WTC11 (cell line): ENCODE measurements at regions of chr11 and their contacts with region 1.

Region 1: DNA sequence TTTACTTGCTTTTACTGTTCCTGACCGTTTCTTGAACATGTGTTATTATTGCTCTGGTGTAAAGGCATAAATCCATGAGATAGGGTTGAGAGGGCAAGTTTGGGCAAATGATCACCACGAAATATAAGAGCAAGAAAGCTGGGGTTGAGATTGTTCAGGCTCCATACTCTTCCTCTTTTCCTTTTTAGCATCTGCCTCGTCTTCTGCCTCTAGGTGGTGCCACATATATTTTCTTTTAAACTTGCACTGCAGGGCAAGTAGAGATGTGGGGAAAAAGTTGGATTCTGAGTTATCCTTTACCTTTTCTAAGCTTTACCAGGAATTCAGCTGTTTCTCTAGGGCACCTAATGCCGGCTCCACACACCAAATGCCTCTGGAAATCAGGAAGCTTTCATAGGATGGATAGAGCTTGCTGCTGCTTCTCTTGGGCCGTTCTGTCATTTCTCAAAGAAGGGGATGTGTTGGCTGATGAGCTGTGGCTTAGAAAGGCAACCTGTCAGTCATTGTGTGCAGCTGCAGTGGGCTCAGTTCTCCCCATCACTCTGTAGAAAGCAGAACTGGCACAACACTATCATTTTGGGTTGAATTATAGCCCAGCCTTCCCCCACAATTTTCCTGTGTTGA is 98.2 kb downstream of the LDLRAD3 start:
- DNase-seq: no peak
- ATAC-seq: peak; percentile 70; the same call in 1 of the 2 replicates
- H3K4me3 Mint-ChIP-seq: no peak overlapping the region
- H3K27ac Mint-ChIP-seq: peak overlapping the region; percentile 91
- H3K4me1 Mint-ChIP-seq: peaks cover 14% of the 10 kb centered on the region
- H3K27me3 Mint-ChIP-seq: no peaks in the 10 kb centered on the region
- CTCF ChIP-seq: no peak

Region 2: DNA sequence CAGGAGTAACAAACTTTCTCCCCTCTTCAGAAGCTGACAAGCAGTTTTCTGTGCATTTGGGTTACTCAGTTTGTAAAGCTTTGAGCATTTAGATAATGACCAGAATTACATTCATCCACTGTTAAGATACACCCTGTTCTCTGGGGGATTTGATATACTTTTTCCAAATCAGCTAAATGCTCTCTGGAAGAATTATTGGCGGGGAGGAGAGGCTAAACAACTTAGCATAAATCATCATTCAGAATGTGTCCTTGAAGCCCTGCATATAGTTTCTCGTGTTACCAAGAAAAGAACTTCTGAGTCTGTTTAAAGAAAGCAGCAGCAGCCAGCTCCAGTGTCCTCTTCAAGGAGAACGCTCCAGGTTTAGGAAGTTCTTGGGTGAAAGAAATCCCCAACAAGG is 153.1 kb before region 1 on chr11:
- CTCF ChIA-PET with region 1: no interaction called
- POLR2A ChIA-PET with region 1: no interaction called
- DNase-seq: no peak
- ATAC-seq: no peak
- H3K4me3 Mint-ChIP-seq: no peak overlapping the region
- H3K27ac Mint-ChIP-seq: no peak overlapping the region
- H3K4me1 Mint-ChIP-seq: peaks cover 19% of the 10 kb centered on the region
- H3K27me3 Mint-ChIP-seq: peaks cover 4% of the 10 kb centered on the region; the same call in 1 of the 2 replicates
- CTCF ChIP-seq: no peak

Region 3: DNA sequence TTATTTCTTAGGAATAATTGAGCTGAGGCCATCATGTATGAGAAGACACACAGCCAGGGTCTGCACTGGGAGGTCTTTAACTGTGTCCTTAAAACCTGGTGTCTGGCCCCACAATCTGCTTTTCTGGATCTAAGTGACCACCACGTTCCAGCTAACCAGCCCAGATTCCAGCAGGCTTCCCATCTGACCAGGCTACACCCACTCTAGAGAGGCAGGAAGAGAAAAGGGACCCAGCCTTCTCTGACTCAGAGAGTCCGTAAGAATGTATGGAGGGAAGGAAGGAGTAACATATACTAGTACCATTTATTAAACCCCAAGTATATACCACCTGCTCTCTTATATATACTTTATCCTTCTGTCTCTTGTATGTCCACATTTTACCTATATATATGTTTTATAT is 18.2 kb before region 1 on chr11:
- CTCF ChIA-PET with region 1: interaction called, 11 read pairs
- POLR2A ChIA-PET with region 1: no interaction called
- DNase-seq: no peak
- ATAC-seq: 0 out of 2 replicates have a peak, but pooled peaks have one; percentile 12
- H3K4me3 Mint-ChIP-seq: no peak overlapping the region
- H3K27ac Mint-ChIP-seq: no peak overlapping the region
- H3K4me1 Mint-ChIP-seq: peaks cover 65% of the 10 kb centered on the region
- H3K27me3 Mint-ChIP-seq: no peaks in the 10 kb centered on the region
- CTCF ChIP-seq: no peak

Region 4: GRCh38 chr11:36056160-36056751 is 14.2 kb after region 1 on chr11:
- CTCF ChIA-PET with region 1: interaction called, 19 read pairs
- POLR2A ChIA-PET with region 1: no interaction called
- DNase-seq: peak; percentile 71
- ATAC-seq: peak; percentile 88
- H3K4me3 Mint-ChIP-seq: no peak overlapping the region
- H3K27ac Mint-ChIP-seq: no peak overlapping the region
- H3K4me1 Mint-ChIP-seq: peaks cover 29% of the 10 kb centered on the region
- H3K27me3 Mint-ChIP-seq: no peaks in the 10 kb centered on the region
- CTCF ChIP-seq: peak; percentile 81